Naive thymus-derived CD4-positive, alpha-beta T cell (primary cell): ENCODE measurements at regions of chr10 and their contacts with region 1.

Region 1: GRCh38 chr10:84308481-84309304 is 19.7 kb upstream of the CCSER2 start:
- DNase-seq: peak in 7 of 9 donors; percentile 15 to 46 (median 31)
- ATAC-seq: peak; percentile 45
- H3K4me3 ChIP-seq: no peak overlapping the region
- H3K4me3 Mint-ChIP-seq: peak overlapping the region in 9 of 10 donors; percentile 9 to 75 (median 61)
- H3K27ac ChIP-seq: no peak overlapping the region
- H3K27ac Mint-ChIP-seq: peak overlapping the region in 6 of 9 donors; percentile 8 to 69 (median 40)
- H3K4me1 ChIP-seq: peaks cover 0 to 15% of the 10 kb centered on the region in 2 donors
- H3K4me1 Mint-ChIP-seq: peaks cover 10 to 43% (median 13%) of the 10 kb centered on the region in 7 donors
- H3K27me3 ChIP-seq: no peaks in the 10 kb centered on the region
- H3K27me3 Mint-ChIP-seq: peaks cover 0 to 8% (median under 1%) of the 10 kb centered on the region in 5 donors

Region 2: DNA sequence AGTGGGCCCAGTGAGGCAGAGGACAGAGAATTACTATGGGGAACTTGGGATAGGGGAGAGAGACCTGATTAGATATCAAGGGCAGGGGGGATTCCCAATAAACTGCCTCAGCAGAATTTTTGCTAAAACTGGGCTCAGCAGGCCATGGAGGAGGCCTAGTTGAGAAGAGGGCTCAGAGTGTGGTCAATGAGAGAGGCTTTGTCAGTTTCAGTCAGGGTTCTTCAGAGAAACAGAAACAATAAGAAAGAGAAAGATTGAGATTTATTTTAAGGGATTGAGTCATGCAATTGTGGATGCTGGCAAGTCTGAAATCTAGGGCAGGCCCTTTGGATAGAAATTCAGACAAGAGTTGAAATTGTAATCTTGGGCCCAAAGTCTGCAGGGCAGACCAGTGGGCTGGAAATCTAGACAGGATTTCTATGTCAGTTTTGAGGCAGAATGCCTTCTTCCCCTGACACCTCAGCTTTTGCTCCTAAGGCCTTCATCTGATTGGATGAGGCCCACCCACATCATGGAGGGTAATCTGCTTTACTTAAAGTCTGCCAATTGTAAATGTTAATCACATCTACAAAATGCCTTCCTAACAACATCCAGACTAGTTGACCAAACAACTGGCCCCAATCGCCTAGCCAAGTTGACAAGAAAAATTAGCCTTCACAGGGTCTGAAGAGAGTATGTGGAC is 13.8 kb before region 1 on chr10:
- CTCF ChIA-PET with region 1: no interaction called
- POLR2A ChIA-PET with region 1: no interaction called
- intact Hi-C with region 1: loop called in 1 of 2 experiments (anchors 2 kb)
- DNase-seq: no peak
- ATAC-seq: no peak
- H3K4me3 ChIP-seq: no peak overlapping the region
- H3K4me3 Mint-ChIP-seq: no peak overlapping the region
- H3K27ac ChIP-seq: no peak overlapping the region
- H3K27ac Mint-ChIP-seq: peak overlapping the region in 2 of 9 donors; percentile 9 to 30
- H3K4me1 ChIP-seq: no peaks in the 10 kb centered on the region
- H3K4me1 Mint-ChIP-seq: peaks cover 0 to 26% (median 0%) of the 10 kb centered on the region in 7 donors
- H3K27me3 ChIP-seq: no peaks in the 10 kb centered on the region
- H3K27me3 Mint-ChIP-seq: peaks cover 0 to 25% (median 5%) of the 10 kb centered on the region in 5 donors

Region 3: DNA sequence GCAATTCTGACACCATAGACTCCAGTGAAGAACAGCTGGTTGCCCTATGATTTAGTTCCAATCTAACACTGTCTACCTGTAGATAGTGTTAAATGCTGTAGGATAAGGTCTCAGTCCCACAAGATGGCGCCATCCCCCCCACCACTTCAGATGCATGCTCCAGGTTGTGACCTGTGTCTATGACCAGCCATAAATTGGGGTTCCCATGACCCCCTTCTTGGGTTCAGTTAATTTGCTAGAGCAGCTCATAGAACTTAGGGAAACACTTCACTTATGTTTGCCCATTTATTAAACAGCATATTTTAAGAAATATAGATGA is 32.8 kb after region 1 on chr10:
- CTCF ChIA-PET with region 1: no interaction called
- POLR2A ChIA-PET with region 1: no interaction called
- intact Hi-C with region 1: loop called in 1 of 2 experiments (anchors 5 kb)
- DNase-seq: no peak
- ATAC-seq: peak; percentile 49
- H3K4me3 ChIP-seq: no peak overlapping the region
- H3K4me3 Mint-ChIP-seq: peak overlapping the region in 7 of 10 donors; percentile 5 to 71 (median 32)
- H3K27ac ChIP-seq: no peak overlapping the region
- H3K27ac Mint-ChIP-seq: peak overlapping the region in 6 of 9 donors; percentile 43 to 63 (median 52)
- H3K4me1 ChIP-seq: peaks cover 35 to 59% of the 10 kb centered on the region in 2 donors
- H3K4me1 Mint-ChIP-seq: peaks cover 50 to 64% (median 61%) of the 10 kb centered on the region in 7 donors
- H3K27me3 ChIP-seq: no peaks in the 10 kb centered on the region
- H3K27me3 Mint-ChIP-seq: no peaks in the 10 kb centered on the region

Region 4: DNA sequence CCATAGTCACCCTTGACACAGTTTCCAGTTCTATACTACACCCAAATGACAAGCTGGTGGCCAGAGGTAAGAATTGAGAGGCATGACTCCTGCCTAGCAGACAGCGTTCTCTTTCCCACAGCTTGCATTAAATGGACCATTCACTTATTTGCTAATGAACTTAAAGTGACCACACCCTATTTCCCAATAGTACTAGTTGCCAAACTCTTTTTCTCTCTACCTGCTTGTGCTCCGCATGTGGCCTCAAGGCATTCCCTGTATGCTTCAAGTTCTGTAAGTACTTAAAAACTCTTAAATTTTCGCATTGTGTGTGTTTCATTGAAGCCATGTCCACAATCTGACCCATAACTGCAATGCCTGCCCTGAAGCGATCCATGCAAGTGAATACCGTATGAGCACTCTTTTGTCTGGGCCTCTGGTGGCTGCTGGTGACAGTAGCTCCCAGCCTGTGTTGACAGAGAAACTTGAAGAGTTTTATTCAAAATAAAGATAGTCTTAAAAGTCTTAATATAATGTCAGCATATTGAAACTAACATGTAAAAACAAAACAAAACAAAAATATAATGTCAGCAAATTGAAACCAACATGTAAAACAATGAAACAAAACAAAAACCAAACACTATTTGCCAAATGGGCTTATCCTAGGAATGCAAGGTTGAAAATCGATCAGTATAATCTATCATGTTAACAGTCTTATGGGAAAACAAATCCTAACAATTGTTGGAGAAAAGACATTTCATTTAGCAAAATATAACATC is 93.3 kb after region 1 on chr10:
- CTCF ChIA-PET with region 1: no interaction called
- POLR2A ChIA-PET with region 1: no interaction called
- intact Hi-C with region 1: no loop called
- DNase-seq: no peak
- ATAC-seq: no peak
- H3K4me3 ChIP-seq: no peak overlapping the region
- H3K4me3 Mint-ChIP-seq: no peak overlapping the region
- H3K27ac ChIP-seq: no peak overlapping the region
- H3K27ac Mint-ChIP-seq: peak overlapping the region in 3 of 9 donors; percentile 10 to 64 (median 52)
- H3K4me1 ChIP-seq: peaks cover 0 to 4% of the 10 kb centered on the region in 2 donors
- H3K4me1 Mint-ChIP-seq: peaks cover 28 to 82% (median 65%) of the 10 kb centered on the region in 7 donors
- H3K27me3 ChIP-seq: no peaks in the 10 kb centered on the region
- H3K27me3 Mint-ChIP-seq: no peaks in the 10 kb centered on the region